ENCODE measurements at regions of chr3 and their contacts with region 1.

Region 1: DNA sequence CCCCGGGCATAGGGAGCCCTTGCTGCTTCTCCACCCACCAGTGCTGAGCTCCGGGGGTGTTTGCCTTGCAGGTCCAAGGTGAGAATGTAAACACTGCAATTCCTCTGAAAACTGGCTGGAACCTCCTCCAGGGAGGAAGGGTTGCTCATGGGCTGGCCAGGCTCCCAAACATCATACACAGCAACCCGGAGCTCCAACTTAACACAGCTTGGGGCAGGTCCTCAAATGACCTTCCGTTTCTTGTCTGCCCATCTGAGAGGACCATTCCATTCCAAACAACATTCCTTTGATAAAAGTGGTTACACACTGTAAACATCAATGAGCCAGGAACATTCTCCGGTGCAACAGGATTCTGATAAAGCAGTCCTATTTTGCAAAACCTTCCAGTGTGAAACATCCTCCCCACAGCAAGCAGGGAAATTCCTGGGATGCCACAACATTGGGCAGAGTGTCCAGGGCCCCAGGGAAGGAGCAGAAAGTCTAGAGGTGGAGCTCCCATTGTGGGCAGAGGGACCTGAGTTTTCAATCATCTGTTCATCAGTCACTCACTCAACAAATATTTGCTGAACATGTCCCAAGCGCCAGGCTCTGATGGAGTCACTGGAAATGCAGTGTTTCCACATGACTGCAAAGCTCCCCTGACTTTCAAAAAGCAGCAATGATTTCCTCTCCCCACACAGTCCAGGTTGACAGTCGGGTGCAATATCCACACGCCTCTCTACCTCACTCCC is 7.3 kb upstream of the HEG1 start:
- DNase-seq: peak; percentile 95
- H3K4me3 ChIP-seq: no peak overlapping the region
- CTCF ChIP-seq: no peak

Region 2: GRCh38 chr3:124928333-124929202 is 134.5 kb before region 1 on chr3:
- CTCF ChIA-PET with region 1: no interaction called
- POLR2A ChIA-PET with region 1: no interaction called
- DNase-seq: no peak
- H3K4me3 ChIP-seq: no peak overlapping the region
- CTCF ChIP-seq: peak; percentile 75

Region 3: GRCh38 chr3:125051715-125052581 is 11.1 kb before region 1 on chr3:
- CTCF ChIA-PET with region 1: interaction called, 3 read pairs
- POLR2A ChIA-PET with region 1: interaction called, 16 read pairs
- DNase-seq: peak; percentile 70
- H3K4me3 ChIP-seq: peak overlapping the region; percentile 86
- CTCF ChIP-seq: no peak

Region 4: GRCh38 chr3:125141596-125142419 is 78.8 kb after region 1 on chr3:
- CTCF ChIA-PET with region 1: no interaction called
- POLR2A ChIA-PET with region 1: interaction called, 10 read pairs
- DNase-seq: no peak
- H3K4me3 ChIP-seq: peak overlapping the region; percentile 15; the same call in 1 of the 2 replicates
- CTCF ChIP-seq: peak; percentile 45

Region 5: GRCh38 chr3:125231895-125232294 is 168.8 kb after region 1 on chr3:
- CTCF ChIA-PET with region 1: no interaction called
- POLR2A ChIA-PET with region 1: no interaction called
- DNase-seq: no peak
- H3K4me3 ChIP-seq: no peak overlapping the region
- CTCF ChIP-seq: no peak